Caco-2 (cell line): ENCODE measurements at regions of chr2 and their contacts with region 1.

Region 1: GRCh38 chr2:106932644-106933043 is 46.7 kb upstream of the ST6GAL2 start:
- DNase-seq: no peak
- H3K4me3 ChIP-seq: no peak overlapping the region
- H3K4me3 Mint-ChIP-seq: no peak overlapping the region
- H3K27ac Mint-ChIP-seq: no peak overlapping the region
- H3K4me1 ChIP-seq: no peaks in the 10 kb centered on the region
- H3K4me1 Mint-ChIP-seq: no peaks in the 10 kb centered on the region
- H3K27me3 ChIP-seq: no peaks in the 10 kb centered on the region
- H3K27me3 Mint-ChIP-seq: peaks cover 2% of the 10 kb centered on the region
- CTCF ChIP-seq: no peak

Region 2: GRCh38 chr2:106572541-106573450 is 359.8 kb before region 1 on chr2:
- CTCF ChIA-PET with region 1: no interaction called
- POLR2A ChIA-PET with region 1: no interaction called
- intact Hi-C with region 1: no loop called
- DNase-seq: peak in 1 of 2 experiments; percentile 32
- H3K4me3 ChIP-seq: no peak overlapping the region
- H3K4me3 Mint-ChIP-seq: no peak overlapping the region
- H3K27ac Mint-ChIP-seq: no peak overlapping the region
- H3K4me1 ChIP-seq: 0 out of 2 replicates have a peak, but pooled peaks cover 8% of the 10 kb centered on the region
- H3K4me1 Mint-ChIP-seq: peaks cover 7% of the 10 kb centered on the region
- H3K27me3 ChIP-seq: no peaks in the 10 kb centered on the region
- H3K27me3 Mint-ChIP-seq: peaks cover 4% of the 10 kb centered on the region
- CTCF ChIP-seq: peak; percentile 45 to 51

Region 3: DNA sequence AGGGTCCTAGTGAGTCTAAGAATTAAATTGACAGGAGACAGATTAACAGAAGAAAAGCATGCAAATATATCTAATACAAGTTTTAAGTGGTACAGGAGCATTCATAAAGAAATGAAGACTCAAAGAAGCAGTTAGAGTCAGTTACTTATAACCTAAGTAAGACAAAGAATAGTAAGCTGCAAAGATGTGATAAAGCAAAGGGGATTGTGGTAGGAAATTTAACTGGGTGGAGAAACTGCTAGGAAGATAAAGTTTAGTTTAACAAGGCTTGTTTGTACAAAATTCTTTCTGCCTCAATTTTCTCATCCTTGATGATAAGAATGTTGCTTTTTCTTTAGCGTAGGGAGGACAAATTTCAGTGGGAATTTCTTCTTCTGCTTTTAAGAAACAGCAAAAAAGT is 11.2 kb before region 1 on chr2:
- CTCF ChIA-PET with region 1: no interaction called
- POLR2A ChIA-PET with region 1: no interaction called
- intact Hi-C with region 1: loop called (anchors 1 kb)
- DNase-seq: no peak
- H3K4me3 ChIP-seq: no peak overlapping the region
- H3K4me3 Mint-ChIP-seq: no peak overlapping the region
- H3K27ac Mint-ChIP-seq: no peak overlapping the region
- H3K4me1 ChIP-seq: no peaks in the 10 kb centered on the region
- H3K4me1 Mint-ChIP-seq: no peaks in the 10 kb centered on the region
- H3K27me3 ChIP-seq: no peaks in the 10 kb centered on the region
- H3K27me3 Mint-ChIP-seq: no peaks in the 10 kb centered on the region
- CTCF ChIP-seq: no peak

Region 4: GRCh38 chr2:107025869-107026380 is 93.3 kb after region 1 on chr2:
- CTCF ChIA-PET with region 1: no interaction called
- POLR2A ChIA-PET with region 1: no interaction called
- intact Hi-C with region 1: no loop called
- DNase-seq: no peak
- H3K4me3 ChIP-seq: no peak overlapping the region
- H3K4me3 Mint-ChIP-seq: no peak overlapping the region
- H3K27ac Mint-ChIP-seq: no peak overlapping the region
- H3K4me1 ChIP-seq: no peaks in the 10 kb centered on the region
- H3K4me1 Mint-ChIP-seq: no peaks in the 10 kb centered on the region
- H3K27me3 ChIP-seq: no peaks in the 10 kb centered on the region
- H3K27me3 Mint-ChIP-seq: peaks cover 2% of the 10 kb centered on the region
- CTCF ChIP-seq: no peak